ENCODE measurements at regions of chr6 and their contacts with region 1.

Region 1: DNA sequence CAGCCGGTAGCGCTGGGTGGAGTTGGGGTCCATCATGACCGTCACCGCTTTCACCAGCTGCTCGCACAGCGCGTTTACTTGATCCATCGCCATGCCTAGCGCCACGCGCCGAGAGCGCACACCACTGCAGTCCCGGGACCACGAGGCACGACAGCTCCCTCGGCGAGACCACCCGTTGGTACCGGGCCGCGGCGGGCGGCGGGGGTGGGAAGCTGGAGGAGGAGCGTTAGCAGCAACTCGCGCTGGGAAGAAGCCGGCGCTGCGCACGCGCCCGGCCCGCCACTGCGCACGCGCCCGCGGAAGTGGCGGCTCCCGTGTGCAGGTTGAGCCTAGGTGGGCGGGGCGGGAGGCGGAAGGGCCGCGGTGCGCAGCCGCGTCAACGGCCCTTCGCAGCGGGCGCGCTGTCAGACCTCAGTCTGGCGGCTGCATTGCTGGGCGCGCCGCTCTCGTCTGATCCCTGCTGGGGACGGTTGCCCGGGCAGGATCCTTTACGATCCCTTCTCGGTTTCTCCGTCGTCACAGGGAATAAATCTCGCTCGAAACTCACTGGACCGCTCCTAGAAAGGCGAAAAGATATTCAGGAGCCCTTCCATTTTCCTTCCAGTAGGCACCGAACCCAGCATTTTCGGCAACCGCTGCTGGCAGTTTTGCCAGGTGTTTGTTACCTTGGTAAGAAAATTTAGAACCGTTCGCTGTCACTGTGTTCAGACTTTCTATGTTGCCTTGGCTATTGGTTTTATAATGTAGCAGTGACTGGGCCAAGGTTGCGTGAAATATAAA is at the starts of genes POLH and XPO5:
- DNase-seq: peak; percentile 93
- H3K4me3 Mint-ChIP-seq: peak within 1 kb of the TSS; percentile 97
- H3K27ac Mint-ChIP-seq: peak within 1 kb of the TSS; percentile 89
- H3K4me1 Mint-ChIP-seq: peaks cover 58% of the 10 kb centered on the region
- H3K27me3 Mint-ChIP-seq: no peaks in the 10 kb centered on the region
- total RNA-seq, gene POLH: 74.6 to 75.5 TPM
- total RNA-seq, gene XPO5: 62.5 to 78.5 TPM

Region 2: GRCh38 chr6:43516697-43517504 is 59.1 kb before region 1 on chr6 and contains the starts of genes POLR1C and YIPF3:
- CTCF ChIA-PET with region 1: interaction called, 3 read pairs
- POLR2A ChIA-PET with region 1: interaction called, 10 read pairs
- DNase-seq: peak; percentile 98
- H3K4me3 Mint-ChIP-seq: no peak within 1 kb of the TSS
- H3K27ac Mint-ChIP-seq: no peak within 1 kb of the TSS
- H3K4me1 Mint-ChIP-seq: peaks cover 29% of the 10 kb centered on the region
- H3K27me3 Mint-ChIP-seq: no peaks in the 10 kb centered on the region
- total RNA-seq, gene POLR1C: 24.1 to 24.3 TPM
- total RNA-seq, gene YIPF3: 71.5 to 77.4 TPM

Region 3: DNA sequence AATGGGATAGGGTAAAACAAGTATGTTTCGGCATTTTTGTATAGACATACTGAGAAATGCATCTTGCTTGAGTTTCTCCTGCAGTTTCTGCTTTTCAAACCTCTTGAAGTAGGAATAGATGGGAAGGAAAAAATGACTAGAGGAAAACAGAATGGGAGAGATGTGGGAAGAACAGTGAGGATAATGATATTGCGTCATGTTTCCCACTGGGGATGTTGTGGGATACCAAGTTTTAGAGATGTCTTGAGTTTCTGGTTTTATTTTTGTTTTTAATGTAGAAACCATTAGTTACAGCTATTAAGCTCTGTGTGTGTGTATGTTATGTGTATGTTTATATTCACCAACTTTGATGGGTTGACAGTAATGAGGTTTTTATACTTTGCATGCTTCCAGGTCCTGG is 24.6 kb after region 1 on chr6:
- CTCF ChIA-PET with region 1: no interaction called
- POLR2A ChIA-PET with region 1: no interaction called
- DNase-seq: no peak
- H3K4me3 Mint-ChIP-seq: no peak overlapping the region
- H3K27ac Mint-ChIP-seq: no peak overlapping the region
- H3K4me1 Mint-ChIP-seq: no peaks in the 10 kb centered on the region
- H3K27me3 Mint-ChIP-seq: no peaks in the 10 kb centered on the region

Measured in activated CD4-positive, alpha-beta memory T cell treated with anti-CD3 and anti-CD28 coated beads, Interleukin-2, amount 10 ng/mL, durations not matched to agents 7 days and 5 days (primary cell).